ENCODE measurements at regions of chr2 and their contacts with region 1.

Region 1: DNA sequence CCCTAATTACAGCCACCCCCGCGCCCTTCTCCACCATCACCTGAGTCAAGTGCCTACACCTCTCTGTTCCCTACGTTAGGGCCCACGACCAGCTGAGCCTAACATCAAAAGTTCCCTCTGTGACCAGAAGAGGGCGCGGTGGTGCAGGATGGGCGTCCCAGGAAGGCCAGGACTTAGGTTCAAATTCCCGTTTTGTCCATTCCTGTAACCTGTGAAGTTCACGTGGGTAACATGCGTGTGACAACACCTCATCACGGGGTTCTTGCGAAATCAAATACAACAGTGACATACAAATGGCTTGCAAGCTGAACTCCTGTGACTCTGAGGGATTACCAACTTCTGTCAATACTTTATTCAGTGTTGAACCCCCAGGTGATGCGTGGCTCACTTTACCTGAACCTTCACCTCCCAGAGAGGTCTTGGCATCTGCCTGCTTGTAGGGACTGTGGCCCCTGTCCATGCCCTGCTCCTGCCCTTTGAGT is 207.9 kb downstream of the ARL4C start:
- DNase-seq: peak; percentile 78
- ATAC-seq: no peak
- H3K4me3 Mint-ChIP-seq: no peak overlapping the region
- H3K27ac Mint-ChIP-seq: peak overlapping the region; percentile 99
- H3K4me1 Mint-ChIP-seq: peaks cover 61% of the 10 kb centered on the region
- H3K27me3 Mint-ChIP-seq: no peaks in the 10 kb centered on the region
- CTCF ChIP-seq: peak; percentile 92

Region 2: DNA sequence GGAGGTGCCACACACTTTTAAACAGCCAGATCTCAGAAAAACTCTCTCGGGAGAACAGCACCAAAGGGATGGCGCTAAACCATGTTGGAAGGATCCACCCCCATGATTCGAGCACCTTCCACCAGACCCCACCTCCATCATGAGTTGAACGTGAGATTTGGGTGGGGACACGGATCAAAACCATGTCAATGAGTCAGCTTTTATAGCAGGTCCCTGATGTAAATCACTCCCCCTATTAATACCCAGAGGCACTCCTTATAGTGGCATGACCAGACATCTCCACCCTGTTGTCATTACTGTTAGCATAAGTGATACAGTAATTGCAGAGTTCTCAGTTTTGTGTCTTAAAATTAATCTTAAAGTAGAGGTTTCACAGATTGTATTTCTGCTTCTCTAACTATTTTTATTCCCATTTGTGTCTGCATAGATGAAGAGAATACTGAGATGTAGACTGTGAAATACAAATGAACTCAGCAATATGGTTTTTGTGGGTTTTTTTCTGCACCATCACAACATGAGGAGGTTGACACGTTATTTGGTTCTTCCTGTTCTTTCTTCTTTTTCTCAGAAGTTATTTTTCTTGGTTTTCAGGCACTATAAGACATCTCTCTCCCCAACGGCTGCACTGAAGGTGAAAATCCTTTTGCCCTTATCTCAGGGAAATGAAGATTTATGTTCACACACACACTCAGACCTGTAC is 10.3 kb before region 1 on chr2:
- CTCF ChIA-PET with region 1: interaction called, 25 read pairs
- POLR2A ChIA-PET with region 1: interaction called, 4 read pairs
- intact Hi-C with region 1: no loop called
- DNase-seq: peak; percentile 50
- ATAC-seq: peak; percentile 70
- H3K4me3 Mint-ChIP-seq: no peak overlapping the region
- H3K27ac Mint-ChIP-seq: peak overlapping the region; percentile 87
- H3K4me1 Mint-ChIP-seq: peaks cover 51% of the 10 kb centered on the region
- H3K27me3 Mint-ChIP-seq: no peaks in the 10 kb centered on the region
- CTCF ChIP-seq: no peak

Region 3: DNA sequence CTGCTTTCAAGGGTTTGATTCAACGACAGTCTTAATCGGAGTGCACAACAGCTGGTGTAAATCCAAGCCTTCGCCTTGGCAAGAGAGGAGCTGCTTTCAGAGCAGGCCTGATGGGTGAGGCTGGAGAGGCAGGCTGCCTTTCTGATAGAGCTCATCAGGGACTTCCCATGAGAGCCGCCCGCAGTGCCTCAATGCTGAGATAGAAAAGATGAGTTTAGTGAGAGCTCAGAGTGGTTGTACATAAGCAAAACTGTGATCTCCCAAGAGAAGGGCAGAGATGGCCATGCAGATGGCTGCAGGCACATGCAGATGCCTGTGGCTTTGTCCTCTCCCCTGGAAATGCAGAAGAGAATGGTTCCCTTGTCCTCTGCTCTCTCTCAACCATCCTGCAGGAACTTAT is 85.7 kb after region 1 on chr2:
- CTCF ChIA-PET with region 1: interaction called, 5 read pairs
- POLR2A ChIA-PET with region 1: interaction called, 5 read pairs
- intact Hi-C with region 1: loop called (anchors 5 kb)
- DNase-seq: no peak
- ATAC-seq: no peak
- H3K4me3 Mint-ChIP-seq: no peak overlapping the region
- H3K27ac Mint-ChIP-seq: no peak overlapping the region
- H3K4me1 Mint-ChIP-seq: peaks cover 51% of the 10 kb centered on the region
- H3K27me3 Mint-ChIP-seq: no peaks in the 10 kb centered on the region
- CTCF ChIP-seq: no peak

Region 4: GRCh38 chr2:234463626-234464290 is 174.7 kb after region 1 on chr2:
- CTCF ChIA-PET with region 1: interaction called, 8 read pairs
- POLR2A ChIA-PET with region 1: interaction called, 10 read pairs
- intact Hi-C with region 1: no loop called
- DNase-seq: peak; percentile 85
- ATAC-seq: peak; percentile 80
- H3K4me3 Mint-ChIP-seq: peak overlapping the region; percentile 65
- H3K27ac Mint-ChIP-seq: peak overlapping the region; percentile 80
- H3K4me1 Mint-ChIP-seq: peaks cover 64% of the 10 kb centered on the region
- H3K27me3 Mint-ChIP-seq: no peaks in the 10 kb centered on the region
- CTCF ChIP-seq: no peak

Region 5: GRCh38 chr2:234823877-234824376 is 534.9 kb after region 1 on chr2:
- CTCF ChIA-PET with region 1: no interaction called
- POLR2A ChIA-PET with region 1: no interaction called
- intact Hi-C with region 1: no loop called
- DNase-seq: no peak
- ATAC-seq: no peak
- H3K4me3 Mint-ChIP-seq: no peak overlapping the region
- H3K27ac Mint-ChIP-seq: no peak overlapping the region
- H3K4me1 Mint-ChIP-seq: no peaks in the 10 kb centered on the region
- H3K27me3 Mint-ChIP-seq: peaks cover 2% of the 10 kb centered on the region
- CTCF ChIP-seq: no peak

Measured in activated CD8-positive, alpha-beta T cell treated with anti-CD3 and anti-CD28 coated beads for 36 hours (primary cell).